GM12878 (cell line): ENCODE measurements at regions of chr3 and their contacts with region 1.

Region 1: GRCh38 chr3:149771652-149772271 is 19.5 kb upstream of the COMMD2 start:
- DNase-seq: no peak
- ATAC-seq: peak; percentile 93
- H3K4me3 ChIP-seq: no peak overlapping the region
- H3K27ac ChIP-seq: no peak overlapping the region
- H3K4me1 ChIP-seq: no peaks in the 10 kb centered on the region
- H3K27me3 ChIP-seq: no peaks in the 10 kb centered on the region; a peak in 1 of 4 replicates
- CTCF ChIP-seq: peak; percentile 79 to 83 (median 79)
- EP300 ChIP-seq: no peak
- POLR2A ChIP-seq: no peak
- RAD21 ChIP-seq: peak; percentile 72

Region 2: GRCh38 chr3:149487598-149488197 is 284.1 kb before region 1 on chr3:
- CTCF ChIA-PET with region 1: interaction called, 18 read pairs
- POLR2A ChIA-PET with region 1: no interaction called
- RAD21 ChIA-PET with region 1: interaction called, 17 read pairs
- SMC1A ChIA-PET with region 1: interaction called, 7 read pairs
- in situ Hi-C with region 1: no loop called
- intact Hi-C with region 1: no loop called
- DNase-seq: no peak
- ATAC-seq: peak; percentile 96
- H3K4me3 ChIP-seq: no peak overlapping the region
- H3K27ac ChIP-seq: no peak overlapping the region
- H3K4me1 ChIP-seq: no peaks in the 10 kb centered on the region
- H3K27me3 ChIP-seq: no peaks in the 10 kb centered on the region
- CTCF ChIP-seq: peak; percentile 56 to 88 (median 87)
- EP300 ChIP-seq: no peak
- POLR2A ChIP-seq: no peak
- RAD21 ChIP-seq: no peak

Region 3: GRCh38 chr3:149501524-149501923 is 270.2 kb before region 1 on chr3:
- CTCF ChIA-PET with region 1: interaction called, 222 read pairs
- POLR2A ChIA-PET with region 1: no interaction called
- RAD21 ChIA-PET with region 1: no interaction called
- SMC1A ChIA-PET with region 1: interaction called, 7 read pairs
- in situ Hi-C with region 1: loop called (anchors 5 kb)
- intact Hi-C with region 1: no loop called
- DNase-seq: no peak
- ATAC-seq: no peak
- H3K4me3 ChIP-seq: no peak overlapping the region
- H3K27ac ChIP-seq: no peak overlapping the region
- H3K4me1 ChIP-seq: no peaks in the 10 kb centered on the region
- H3K27me3 ChIP-seq: no peaks in the 10 kb centered on the region
- CTCF ChIP-seq: no peak
- EP300 ChIP-seq: no peak
- POLR2A ChIP-seq: no peak
- RAD21 ChIP-seq: no peak

Region 4: DNA sequence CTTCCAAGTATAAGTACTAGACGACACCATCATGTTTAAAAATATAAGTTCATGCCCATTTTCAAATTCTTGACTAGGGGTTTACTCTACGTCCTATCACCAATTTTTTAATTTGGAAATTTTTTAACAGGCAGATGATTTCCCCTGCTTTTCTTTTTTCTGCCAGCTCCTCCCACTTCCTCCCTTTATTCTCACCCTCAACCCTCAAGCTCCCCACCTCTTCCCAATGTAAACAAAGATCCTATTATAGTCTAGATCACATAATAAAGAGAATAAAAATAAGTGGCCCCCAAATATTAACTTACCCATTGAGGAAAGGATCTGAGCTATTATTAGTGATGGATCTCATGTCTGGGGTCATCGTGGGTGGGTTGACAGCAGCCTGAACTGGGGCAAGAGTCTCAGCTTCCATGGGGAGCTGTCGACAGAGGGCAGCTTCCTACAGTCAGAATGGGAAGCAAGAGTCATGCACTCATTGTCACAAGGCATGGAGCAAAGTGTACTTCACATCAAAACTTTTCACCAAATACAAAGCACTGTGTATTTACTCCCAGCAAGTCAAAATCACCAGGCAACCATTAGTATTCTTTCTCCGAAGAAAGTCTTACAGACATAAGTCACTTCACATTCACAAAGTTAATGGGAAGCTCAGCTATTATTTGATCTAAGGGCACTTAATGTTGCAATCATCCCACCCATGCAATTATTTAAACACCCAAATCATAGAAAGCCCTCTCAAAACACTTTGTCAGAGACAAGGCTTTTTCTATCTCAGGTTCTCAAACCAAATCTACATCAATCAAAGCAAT is 244.0 kb before region 1 on chr3:
- CTCF ChIA-PET with region 1: interaction called, 128 read pairs
- POLR2A ChIA-PET with region 1: no interaction called
- RAD21 ChIA-PET with region 1: interaction called, 11 read pairs
- SMC1A ChIA-PET with region 1: interaction called, 34 read pairs
- in situ Hi-C with region 1: no loop called
- intact Hi-C with region 1: no loop called
- DNase-seq: no peak
- ATAC-seq: no peak
- H3K4me3 ChIP-seq: no peak overlapping the region
- H3K27ac ChIP-seq: no peak overlapping the region
- H3K4me1 ChIP-seq: peaks cover 7% of the 10 kb centered on the region
- H3K27me3 ChIP-seq: no peaks in the 10 kb centered on the region
- CTCF ChIP-seq: no peak
- EP300 ChIP-seq: no peak
- POLR2A ChIP-seq: no peak
- RAD21 ChIP-seq: no peak

Region 5: DNA sequence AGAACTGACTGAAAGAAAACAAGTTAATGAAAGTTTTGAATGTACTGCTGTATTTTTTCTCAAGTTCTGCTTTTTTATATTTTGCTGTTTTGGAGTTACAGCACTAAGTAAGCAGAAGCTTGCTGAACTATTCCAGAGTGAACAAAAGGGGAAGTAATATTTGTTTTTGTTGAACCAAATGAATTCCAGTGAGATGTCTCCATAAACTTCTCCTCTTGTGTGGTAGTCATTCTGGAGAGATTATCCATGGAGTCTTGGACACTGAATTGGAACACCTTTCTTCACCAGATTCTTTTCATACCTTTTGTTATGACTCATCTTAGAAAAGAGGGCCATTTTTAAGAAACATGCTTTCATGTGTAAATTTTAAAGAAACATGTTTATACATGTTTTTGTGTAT is 11.8 kb after region 1 on chr3:
- CTCF ChIA-PET with region 1: interaction called, 26 read pairs
- POLR2A ChIA-PET with region 1: no interaction called
- RAD21 ChIA-PET with region 1: no interaction called
- SMC1A ChIA-PET with region 1: interaction called, 7 read pairs
- in situ Hi-C with region 1: no loop called
- intact Hi-C with region 1: no loop called
- DNase-seq: no peak
- ATAC-seq: no peak; the same call in 1 of the 3 replicates
- H3K4me3 ChIP-seq: no peak overlapping the region
- H3K27ac ChIP-seq: no peak overlapping the region
- H3K4me1 ChIP-seq: peaks cover 4% of the 10 kb centered on the region
- H3K27me3 ChIP-seq: no peaks in the 10 kb centered on the region
- CTCF ChIP-seq: no peak
- EP300 ChIP-seq: no peak
- POLR2A ChIP-seq: no peak
- RAD21 ChIP-seq: no peak